B cell (primary cell): ENCODE measurements at regions of chr21 and their contacts with region 1.

Region 1: GRCh38 chr21:34888569-34889319 is 160.4 kb downstream of the RUNX1 start:
- DNase-seq: peak; percentile 79
- ATAC-seq: peak; percentile 44
- H3K4me3 ChIP-seq: peak overlapping the region; percentile 32 to 80 (median 62)
- H3K4me3 Mint-ChIP-seq: peak overlapping the region; percentile 94
- H3K27ac ChIP-seq: peak overlapping the region; percentile 50 to 82
- H3K27ac Mint-ChIP-seq: peak overlapping the region; percentile 93
- H3K4me1 ChIP-seq: peaks cover 49 to 58% of the 10 kb centered on the region in 2 donors
- H3K4me1 Mint-ChIP-seq: peaks cover 49% of the 10 kb centered on the region
- H3K27me3 ChIP-seq: peaks cover 0 to 13% (median 2%) of the 10 kb centered on the region in 4 experiments
- H3K27me3 Mint-ChIP-seq: no peaks in the 10 kb centered on the region
- CTCF ChIP-seq: no peak

Region 2: GRCh38 chr21:34836103-34836932 is 52.4 kb before region 1 on chr21:
- CTCF ChIA-PET with region 1: no interaction called
- POLR2A ChIA-PET with region 1: no interaction called
- intact Hi-C with region 1: no loop called
- DNase-seq: no peak
- ATAC-seq: no peak
- H3K4me3 ChIP-seq: no peak overlapping the region
- H3K4me3 Mint-ChIP-seq: no peak overlapping the region
- H3K27ac ChIP-seq: no peak overlapping the region
- H3K27ac Mint-ChIP-seq: no peak overlapping the region
- H3K4me1 ChIP-seq: no peaks in the 10 kb centered on the region
- H3K4me1 Mint-ChIP-seq: peaks cover 5% of the 10 kb centered on the region
- H3K27me3 ChIP-seq: no peaks in the 10 kb centered on the region
- H3K27me3 Mint-ChIP-seq: no peaks in the 10 kb centered on the region
- CTCF ChIP-seq: no peak

Region 3: DNA sequence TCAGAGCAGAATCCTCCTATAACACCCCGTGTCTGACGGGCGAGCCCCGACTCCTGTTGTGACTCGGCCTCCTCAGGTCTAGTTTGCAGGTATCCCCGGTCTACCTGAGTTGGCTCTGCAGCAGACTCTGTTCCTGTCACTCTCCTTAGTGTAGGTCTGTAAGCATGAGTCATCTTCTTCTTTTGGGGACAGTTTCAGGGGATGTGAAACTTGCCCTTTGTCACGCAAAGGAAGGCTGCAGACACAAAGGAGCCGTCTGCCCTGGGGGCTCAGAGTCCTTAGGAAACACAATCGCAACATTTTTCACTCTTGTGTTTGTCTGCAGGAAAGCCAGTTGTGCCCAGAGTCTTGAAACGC is 22.8 kb before region 1 on chr21:
- CTCF ChIA-PET with region 1: interaction called, 17 read pairs
- POLR2A ChIA-PET with region 1: interaction called, 18 read pairs
- intact Hi-C with region 1: loop called (anchors 1 kb)
- DNase-seq: peak; percentile 76
- ATAC-seq: peak; percentile 84
- H3K4me3 ChIP-seq: no peak overlapping the region
- H3K4me3 Mint-ChIP-seq: peak overlapping the region; percentile 69
- H3K27ac ChIP-seq: no peak overlapping the region
- H3K27ac Mint-ChIP-seq: peak overlapping the region; percentile 88
- H3K4me1 ChIP-seq: peaks cover 24 to 27% of the 10 kb centered on the region in 2 donors
- H3K4me1 Mint-ChIP-seq: peaks cover 31% of the 10 kb centered on the region
- H3K27me3 ChIP-seq: no peaks in the 10 kb centered on the region
- H3K27me3 Mint-ChIP-seq: no peaks in the 10 kb centered on the region
- CTCF ChIP-seq: no peak

Region 4: DNA sequence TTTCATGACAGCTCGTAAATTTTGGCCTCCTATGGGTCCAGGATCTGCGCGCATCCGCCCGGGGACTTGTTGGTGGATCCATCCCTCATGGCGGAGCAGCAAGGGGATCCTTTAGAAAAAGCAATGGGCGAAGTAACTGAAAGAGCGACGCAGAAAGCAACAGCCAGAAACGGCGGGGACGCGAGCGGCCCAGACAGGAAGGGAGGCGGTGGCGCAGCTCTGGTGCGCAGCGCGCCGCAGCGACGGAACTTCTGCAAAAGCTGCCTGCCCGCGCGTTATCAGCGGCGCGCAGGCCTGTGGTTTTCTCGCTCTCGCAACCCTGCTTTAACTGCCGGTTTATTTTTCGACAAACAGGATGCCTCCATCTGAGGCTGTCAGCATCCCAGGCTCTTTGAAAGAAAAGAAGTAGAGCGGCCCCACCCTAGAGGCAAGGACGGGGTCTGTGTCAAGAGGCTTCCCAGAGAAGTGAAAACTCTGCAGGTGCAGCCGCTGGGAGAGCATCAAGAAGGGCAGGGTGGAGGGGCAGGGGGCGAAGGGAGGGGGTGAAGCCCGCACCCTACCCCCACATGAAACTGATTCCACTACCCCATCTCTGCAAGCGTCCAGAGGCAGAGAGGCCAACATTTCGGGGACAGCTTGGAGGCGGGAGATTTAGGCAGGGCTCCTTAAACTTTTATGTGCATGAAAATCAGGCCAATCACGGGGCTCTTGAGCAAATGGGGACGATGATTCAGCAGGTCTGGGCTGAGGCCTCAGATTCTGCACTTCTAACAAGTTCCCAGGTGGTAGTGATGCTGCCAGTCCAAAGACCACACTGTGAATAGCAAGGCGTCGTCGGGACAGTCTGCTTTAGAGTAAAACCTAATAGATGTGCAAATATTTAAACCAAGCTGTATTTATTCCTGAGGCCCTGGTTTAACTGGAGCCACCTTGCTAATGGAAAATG is 138.1 kb after region 1 on chr21:
- CTCF ChIA-PET with region 1: interaction called, 9 read pairs
- POLR2A ChIA-PET with region 1: interaction called, 4 read pairs
- intact Hi-C with region 1: loop called (anchors 2 kb)
- DNase-seq: peak; percentile 90
- ATAC-seq: peak; percentile 91
- H3K4me3 ChIP-seq: peak overlapping the region; percentile 11 to 65 (median 53)
- H3K4me3 Mint-ChIP-seq: peak overlapping the region; percentile 92
- H3K27ac ChIP-seq: peak overlapping the region; percentile 46 to 87
- H3K27ac Mint-ChIP-seq: peak overlapping the region; percentile 99
- H3K4me1 ChIP-seq: peaks cover 42 to 45% of the 10 kb centered on the region in 2 donors
- H3K4me1 Mint-ChIP-seq: peaks cover 63% of the 10 kb centered on the region
- H3K27me3 ChIP-seq: no peaks in the 10 kb centered on the region
- H3K27me3 Mint-ChIP-seq: no peaks in the 10 kb centered on the region
- CTCF ChIP-seq: no peak

Region 5: DNA sequence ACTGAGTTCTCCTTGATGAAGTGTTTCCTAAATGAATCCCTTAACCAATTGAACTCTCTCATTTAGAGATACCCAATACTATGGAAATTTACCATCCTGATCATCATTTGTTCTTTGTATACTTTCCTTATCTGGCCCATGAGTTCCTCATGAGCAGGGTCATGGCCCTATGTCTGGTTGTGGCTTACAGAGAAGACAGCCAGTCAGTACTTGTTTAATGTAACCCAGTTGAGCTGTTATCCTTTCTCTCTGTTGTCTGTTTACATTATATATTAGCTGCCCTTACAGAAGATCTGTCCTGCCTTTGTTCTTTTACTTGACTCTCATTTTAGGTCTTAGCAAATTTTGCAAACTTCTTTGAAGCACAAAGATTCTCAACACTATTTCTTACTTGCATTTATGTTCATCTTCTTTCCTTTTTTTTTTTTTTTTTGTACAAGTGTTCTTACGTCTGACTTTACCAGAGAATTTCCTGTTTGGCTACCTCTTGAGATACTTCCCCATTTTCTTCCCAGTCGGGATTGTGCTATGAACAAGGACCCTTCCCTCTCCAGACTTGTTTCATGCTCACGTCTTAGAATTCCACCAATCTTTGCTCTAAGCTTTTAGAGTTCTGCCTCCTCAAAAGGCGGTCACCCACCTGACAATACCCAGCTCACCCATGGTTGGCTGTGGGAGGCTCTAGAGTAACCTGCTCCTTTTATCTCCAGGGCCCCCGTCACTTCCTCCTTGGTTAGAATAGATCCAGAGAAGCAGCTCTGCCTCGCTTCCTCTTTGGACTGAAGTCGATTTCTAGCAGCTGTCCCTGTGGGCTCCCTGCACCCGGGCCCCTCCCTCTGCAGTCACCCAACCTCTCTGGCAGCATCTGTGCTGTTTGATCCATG is 214.0 kb after region 1 on chr21:
- CTCF ChIA-PET with region 1: no interaction called
- POLR2A ChIA-PET with region 1: no interaction called
- intact Hi-C with region 1: loop called (anchors 2 kb)
- DNase-seq: peak; percentile 78
- ATAC-seq: peak; percentile 98
- H3K4me3 ChIP-seq: peak overlapping the region in 1 of 5 experiments; percentile 5
- H3K4me3 Mint-ChIP-seq: no peak overlapping the region
- H3K27ac ChIP-seq: peak overlapping the region in 1 of 2 donors; percentile 27
- H3K27ac Mint-ChIP-seq: no peak overlapping the region
- H3K4me1 ChIP-seq: peaks cover 14 to 19% of the 10 kb centered on the region in 2 donors
- H3K4me1 Mint-ChIP-seq: no peaks in the 10 kb centered on the region
- H3K27me3 ChIP-seq: no peaks in the 10 kb centered on the region
- H3K27me3 Mint-ChIP-seq: peaks cover 3% of the 10 kb centered on the region
- CTCF ChIP-seq: no peak

Region 6: DNA sequence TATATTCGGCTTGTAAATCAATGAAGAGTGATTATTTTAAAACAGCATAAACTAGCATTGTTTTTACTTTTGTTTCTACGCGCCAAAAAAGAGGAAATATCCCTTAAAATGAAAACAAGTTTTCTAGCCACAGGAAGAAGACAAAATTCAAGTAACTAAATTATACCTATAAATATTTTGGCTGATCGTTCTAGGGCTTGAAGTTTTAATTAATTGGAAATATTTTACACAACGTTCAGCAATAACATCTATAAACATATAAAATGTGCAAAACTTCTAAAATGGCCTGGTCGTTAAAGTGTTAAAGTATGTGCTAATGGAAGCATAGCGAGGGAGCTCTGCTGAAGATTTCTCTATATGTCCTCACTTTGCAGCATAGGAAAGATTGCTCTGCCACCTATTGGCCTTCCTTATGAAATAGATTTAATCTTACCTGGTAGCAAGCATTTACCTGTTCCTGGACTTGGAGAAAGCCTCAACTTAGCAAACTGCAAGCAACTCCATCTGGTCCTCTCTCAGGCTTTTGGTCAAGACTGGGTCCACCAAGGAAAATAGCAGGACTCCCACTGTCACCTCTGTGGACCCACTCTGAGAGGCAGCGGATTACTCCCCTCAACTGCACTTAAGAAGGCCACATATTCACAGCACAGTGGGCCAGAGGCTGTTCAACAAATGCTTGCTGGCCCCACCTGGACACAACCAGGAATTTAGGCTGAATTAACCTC is 511.7 kb after region 1 on chr21:
- CTCF ChIA-PET with region 1: interaction called, 78 read pairs
- POLR2A ChIA-PET with region 1: interaction called, 14 read pairs
- intact Hi-C with region 1: loop called (anchors 1 kb)
- DNase-seq: peak; percentile 77
- ATAC-seq: peak; percentile 80
- H3K4me3 ChIP-seq: no peak overlapping the region
- H3K4me3 Mint-ChIP-seq: no peak overlapping the region
- H3K27ac ChIP-seq: no peak overlapping the region
- H3K27ac Mint-ChIP-seq: no peak overlapping the region
- H3K4me1 ChIP-seq: no peaks in the 10 kb centered on the region
- H3K4me1 Mint-ChIP-seq: peaks cover 2% of the 10 kb centered on the region
- H3K27me3 ChIP-seq: peaks cover 0 to 5% (median under 1%) of the 10 kb centered on the region in 4 experiments
- H3K27me3 Mint-ChIP-seq: peaks cover 4% of the 10 kb centered on the region
- CTCF ChIP-seq: peak; percentile 77

Region 7: DNA sequence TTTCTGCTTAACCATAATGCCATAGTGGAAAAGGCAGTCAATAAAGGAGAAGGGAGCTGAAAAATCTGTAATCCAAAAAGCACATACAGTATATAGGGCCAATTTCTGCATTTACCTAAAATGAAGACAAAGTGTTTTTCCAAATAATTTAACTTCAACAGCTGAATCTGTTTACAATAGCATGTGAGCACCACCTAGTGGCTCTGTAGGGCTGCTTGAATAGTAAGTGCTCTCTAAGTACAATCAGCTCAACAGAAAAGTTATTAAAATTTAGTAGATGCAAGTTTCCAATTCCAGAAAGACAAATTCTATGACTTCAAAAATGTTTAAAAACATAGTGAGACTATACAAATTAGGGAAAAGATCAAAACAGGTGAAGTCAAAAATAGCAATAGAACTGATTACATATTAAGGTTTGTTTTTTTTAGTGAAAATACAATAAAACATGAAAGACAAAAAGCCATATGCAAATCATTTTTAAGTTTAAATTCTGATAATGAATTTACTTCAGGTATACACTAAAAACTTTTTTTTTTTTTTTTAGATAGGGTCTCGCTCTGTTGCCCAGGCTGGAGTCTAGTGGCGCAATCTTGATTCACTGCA is 951.6 kb after region 1 on chr21:
- CTCF ChIA-PET with region 1: interaction called, 13 read pairs
- POLR2A ChIA-PET with region 1: no interaction called
- intact Hi-C with region 1: loop called (anchors 1 kb)
- DNase-seq: peak; percentile 68
- ATAC-seq: no peak
- H3K4me3 ChIP-seq: no peak overlapping the region
- H3K4me3 Mint-ChIP-seq: no peak overlapping the region
- H3K27ac ChIP-seq: no peak overlapping the region
- H3K27ac Mint-ChIP-seq: no peak overlapping the region
- H3K4me1 ChIP-seq: no peaks in the 10 kb centered on the region
- H3K4me1 Mint-ChIP-seq: no peaks in the 10 kb centered on the region
- H3K27me3 ChIP-seq: no peaks in the 10 kb centered on the region
- H3K27me3 Mint-ChIP-seq: peaks cover 13% of the 10 kb centered on the region
- CTCF ChIP-seq: peak; percentile 86